OCI-LY7 (cell line): ENCODE measurements at regions of chr6 and their contacts with region 1.

Region 1: DNA sequence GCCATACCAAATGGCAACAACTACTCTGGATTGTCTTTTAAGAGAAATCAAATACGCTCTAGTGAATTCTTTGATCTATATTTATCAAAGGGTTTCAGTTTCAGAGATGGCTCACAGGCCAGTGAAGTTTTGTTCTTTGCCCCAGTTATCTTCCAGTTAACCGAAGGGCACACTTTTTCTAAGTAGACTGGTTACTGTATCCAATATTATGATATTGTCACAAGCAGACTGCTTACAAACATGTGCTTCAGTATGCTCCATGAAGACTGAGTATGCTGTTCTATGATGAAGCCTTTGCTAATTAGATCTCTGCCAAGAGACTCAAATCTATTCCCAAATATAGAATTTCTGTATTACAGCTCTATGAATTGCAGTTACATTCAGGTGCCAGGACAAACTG is 181.1 kb downstream of the REV3L start:
- DNase-seq: peak; percentile 61
- H3K4me3 ChIP-seq: peak overlapping the region; percentile 40
- H3K27ac ChIP-seq: peak overlapping the region; percentile 68
- H3K4me1 ChIP-seq: peaks cover 20% of the 10 kb centered on the region
- CTCF ChIP-seq: no peak

Region 2: DNA sequence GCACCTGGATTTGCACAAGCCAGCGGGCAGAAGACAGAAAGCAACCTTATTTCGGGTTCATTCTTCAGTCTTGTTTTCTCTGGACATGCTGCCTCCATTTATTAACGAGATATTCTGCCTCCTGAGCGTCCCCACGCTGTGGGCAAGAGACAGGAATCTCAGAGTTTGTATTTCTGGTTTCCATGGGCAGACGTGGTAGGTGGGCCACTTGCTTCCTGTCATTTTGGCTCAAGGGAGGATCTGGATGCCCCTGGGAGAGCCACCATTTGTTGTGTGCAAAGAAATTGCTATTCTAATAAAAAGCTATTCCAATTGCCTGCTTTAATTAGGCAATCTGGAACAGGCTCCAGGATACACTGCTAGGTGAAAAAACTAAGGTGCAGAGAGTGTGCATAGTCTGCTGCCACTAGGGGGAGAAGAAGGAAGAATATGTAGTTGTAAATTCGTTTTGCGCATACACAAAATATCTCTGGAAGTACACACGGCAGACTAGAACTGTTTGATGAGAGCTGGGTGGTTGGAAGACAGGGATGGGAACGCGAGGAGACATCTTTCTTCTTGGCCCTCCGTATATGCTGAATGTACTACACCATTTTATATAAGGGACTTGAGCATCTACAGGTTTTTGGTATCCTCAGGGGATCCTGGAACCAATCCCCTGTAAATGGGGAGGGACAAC is 244.7 kb before region 1 on chr6:
- CTCF ChIA-PET with region 1: no interaction called
- POLR2A ChIA-PET with region 1: no interaction called
- intact Hi-C with region 1: no loop called
- DNase-seq: peak; percentile 55
- H3K4me3 ChIP-seq: no peak overlapping the region
- H3K27ac ChIP-seq: no peak overlapping the region
- H3K4me1 ChIP-seq: no peaks in the 10 kb centered on the region
- CTCF ChIP-seq: peak; percentile 92

Region 3: GRCh38 chr6:111283707-111284106 is 18.2 kb before region 1 on chr6:
- CTCF ChIA-PET with region 1: no interaction called
- POLR2A ChIA-PET with region 1: no interaction called
- intact Hi-C with region 1: loop called (anchors 1 kb)
- DNase-seq: no peak
- H3K4me3 ChIP-seq: no peak overlapping the region
- H3K27ac ChIP-seq: peak overlapping the region; percentile 19
- H3K4me1 ChIP-seq: peaks cover 14% of the 10 kb centered on the region
- CTCF ChIP-seq: no peak

Region 4: DNA sequence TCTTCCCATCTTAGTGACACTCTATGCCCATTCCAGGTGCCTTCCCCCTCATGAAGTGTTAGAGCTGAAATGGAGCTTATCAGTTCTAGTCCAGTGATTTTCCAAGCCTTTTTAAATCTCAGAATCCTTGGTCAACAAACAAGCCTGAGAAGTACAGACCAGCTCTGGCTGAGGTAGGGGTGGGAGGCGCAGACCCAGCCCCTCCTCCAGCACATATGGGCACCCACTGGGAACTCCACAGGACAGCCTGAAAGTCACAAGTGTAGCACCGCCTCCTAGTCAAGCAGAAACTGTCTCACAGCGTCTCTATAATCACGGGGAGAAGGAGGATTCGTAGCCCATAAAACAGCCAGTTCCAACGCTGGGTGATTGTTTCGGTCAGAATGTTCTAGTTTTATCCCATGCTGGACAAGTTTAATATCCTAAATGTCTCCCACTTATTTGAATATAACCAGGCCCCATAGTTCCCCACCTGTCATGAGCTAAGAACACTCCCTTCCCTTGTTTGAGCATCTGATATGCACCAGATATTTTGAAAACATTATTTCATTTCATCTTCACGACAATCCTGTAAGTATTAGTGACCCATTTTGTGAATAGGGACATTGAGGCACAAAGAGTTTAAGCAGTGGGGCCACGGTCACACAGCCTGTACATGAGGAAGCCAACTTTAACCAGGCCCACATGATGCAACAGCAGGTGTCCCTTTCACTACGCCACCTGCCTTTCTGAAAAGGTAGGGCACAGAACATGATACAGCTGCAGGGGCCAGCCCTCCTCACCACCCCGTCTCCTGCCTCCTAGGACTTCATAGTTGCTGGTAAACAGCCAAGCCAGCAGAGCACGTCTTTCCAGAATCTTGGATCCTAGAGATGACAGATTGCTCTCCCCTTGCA is 263.6 kb after region 1 on chr6:
- CTCF ChIA-PET with region 1: no interaction called
- POLR2A ChIA-PET with region 1: no interaction called
- intact Hi-C with region 1: no loop called
- DNase-seq: peak; percentile 86
- H3K4me3 ChIP-seq: no peak overlapping the region
- H3K27ac ChIP-seq: peak overlapping the region; percentile 45
- H3K4me1 ChIP-seq: peaks cover 13% of the 10 kb centered on the region
- CTCF ChIP-seq: peak; percentile 73